Activated CD8-positive, alpha-beta memory T cell treated with anti-CD3 and anti-CD28 coated beads, Interleukin-2, amount 10 ng/mL, durations not matched to agents 7 days and 5 days (primary cell): ENCODE measurements at regions of chr19 and their contacts with region 1.

Region 1: GRCh38 chr19:16118489-16119033 is 6.9 kb downstream of the RAB8A start:
- DNase-seq: peak; percentile 82
- ATAC-seq: peak; percentile 73
- H3K4me3 Mint-ChIP-seq: peak overlapping the region; percentile 75
- H3K27ac Mint-ChIP-seq: peak overlapping the region; percentile 99
- H3K4me1 Mint-ChIP-seq: peaks cover 89% of the 10 kb centered on the region
- H3K27me3 Mint-ChIP-seq: no peaks in the 10 kb centered on the region

Region 2: DNA sequence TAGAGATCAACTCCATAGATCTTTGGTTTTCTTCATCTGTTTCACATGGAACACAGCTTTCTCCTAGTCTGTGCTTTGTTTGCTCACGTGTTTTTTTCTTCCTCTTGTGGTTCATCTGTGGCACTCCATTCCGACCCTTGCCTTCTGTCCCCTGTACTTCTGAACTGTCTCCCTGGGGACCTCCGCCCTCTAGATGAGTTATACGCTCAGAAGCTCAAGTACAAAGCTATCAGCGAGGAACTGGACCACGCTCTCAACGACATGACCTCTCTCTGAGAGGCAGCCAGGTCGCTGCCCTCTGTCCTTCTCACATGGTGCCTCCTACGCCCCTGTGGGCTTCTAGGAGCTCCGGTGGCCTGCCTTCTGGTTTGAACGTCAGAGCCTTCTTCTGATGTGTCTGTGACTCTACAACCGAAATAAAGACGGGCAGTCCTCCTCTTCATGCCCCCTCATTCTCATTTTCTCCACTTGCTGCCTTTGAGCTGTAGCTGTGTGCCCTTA is 23.4 kb before region 1 on chr19:
- CTCF ChIA-PET with region 1: no interaction called
- DNase-seq: no peak
- ATAC-seq: no peak
- H3K4me3 Mint-ChIP-seq: no peak overlapping the region
- H3K27ac Mint-ChIP-seq: peak overlapping the region; percentile 57
- H3K4me1 Mint-ChIP-seq: peaks cover 39% of the 10 kb centered on the region
- H3K27me3 Mint-ChIP-seq: no peaks in the 10 kb centered on the region

Region 3: GRCh38 chr19:16143399-16144245 is 25.1 kb after region 1 on chr19 and contains the start of gene HSH2D:
- CTCF ChIA-PET with region 1: interaction called, 34 read pairs
- DNase-seq: peak; percentile 96
- ATAC-seq: peak; percentile 93
- H3K4me3 Mint-ChIP-seq: peak within 1 kb of the TSS; percentile 98
- H3K27ac Mint-ChIP-seq: peak within 1 kb of the TSS; percentile 100
- H3K4me1 Mint-ChIP-seq: peaks cover 71% of the 10 kb centered on the region
- H3K27me3 Mint-ChIP-seq: no peaks in the 10 kb centered on the region
- total RNA-seq, gene HSH2D: 181 to 199 TPM

Region 4: GRCh38 chr19:16153582-16154336 is 35.2 kb after region 1 on chr19:
- CTCF ChIA-PET with region 1: interaction called, 11 read pairs
- DNase-seq: peak; percentile 66
- ATAC-seq: peak; percentile 40
- H3K4me3 Mint-ChIP-seq: no peak overlapping the region
- H3K27ac Mint-ChIP-seq: peak overlapping the region; percentile 32
- H3K4me1 Mint-ChIP-seq: peaks cover 61% of the 10 kb centered on the region
- H3K27me3 Mint-ChIP-seq: no peaks in the 10 kb centered on the region